Activated CD4-positive, alpha-beta memory T cell treated with anti-CD3 and anti-CD28 coated beads, Interleukin-2, amount 10 ng/mL, durations not matched to agents 7 days and 5 days (primary cell): ENCODE measurements at regions of chr7 and their contacts with region 1.

Region 1: GRCh38 chr7:157474689-157475088 is 137.9 kb downstream of the DNAJB6 start:
- DNase-seq: peak; percentile 21
- H3K4me3 Mint-ChIP-seq: no peak overlapping the region
- H3K27ac Mint-ChIP-seq: no peak overlapping the region
- H3K4me1 Mint-ChIP-seq: peaks cover 60% of the 10 kb centered on the region
- H3K27me3 Mint-ChIP-seq: peaks cover 4% of the 10 kb centered on the region

Region 2: GRCh38 chr7:157485361-157485831 is 10.7 kb after region 1 on chr7:
- CTCF ChIA-PET with region 1: interaction called, 12 read pairs
- POLR2A ChIA-PET with region 1: interaction called, 7 read pairs
- DNase-seq: peak; percentile 60
- H3K4me3 Mint-ChIP-seq: no peak overlapping the region
- H3K27ac Mint-ChIP-seq: peak overlapping the region; percentile 65
- H3K4me1 Mint-ChIP-seq: peaks cover 40% of the 10 kb centered on the region
- H3K27me3 Mint-ChIP-seq: peaks cover 8% of the 10 kb centered on the region

Region 3: GRCh38 chr7:157502701-157503111 is 28.0 kb after region 1 on chr7:
- CTCF ChIA-PET with region 1: interaction called, 3 read pairs
- POLR2A ChIA-PET with region 1: interaction called, 12 read pairs
- DNase-seq: peak; percentile 81
- H3K4me3 Mint-ChIP-seq: peak overlapping the region; percentile 64
- H3K27ac Mint-ChIP-seq: peak overlapping the region; percentile 74
- H3K4me1 Mint-ChIP-seq: peaks cover 32% of the 10 kb centered on the region
- H3K27me3 Mint-ChIP-seq: peaks cover 20% of the 10 kb centered on the region